Activated naive CD4-positive, alpha-beta T cell treated with anti-CD3 and anti-CD28 coated beads for 36 hours (primary cell): ENCODE measurements at regions of chr4 and their contacts with region 1.

Region 1: GRCh38 chr4:77044461-77045150 is 31.2 kb downstream of the CCNI start:
- DNase-seq: no peak
- H3K4me3 Mint-ChIP-seq: no peak overlapping the region
- H3K27ac Mint-ChIP-seq: no peak overlapping the region
- H3K4me1 Mint-ChIP-seq: peaks cover 6% of the 10 kb centered on the region
- H3K27me3 Mint-ChIP-seq: no peaks in the 10 kb centered on the region

Region 2: DNA sequence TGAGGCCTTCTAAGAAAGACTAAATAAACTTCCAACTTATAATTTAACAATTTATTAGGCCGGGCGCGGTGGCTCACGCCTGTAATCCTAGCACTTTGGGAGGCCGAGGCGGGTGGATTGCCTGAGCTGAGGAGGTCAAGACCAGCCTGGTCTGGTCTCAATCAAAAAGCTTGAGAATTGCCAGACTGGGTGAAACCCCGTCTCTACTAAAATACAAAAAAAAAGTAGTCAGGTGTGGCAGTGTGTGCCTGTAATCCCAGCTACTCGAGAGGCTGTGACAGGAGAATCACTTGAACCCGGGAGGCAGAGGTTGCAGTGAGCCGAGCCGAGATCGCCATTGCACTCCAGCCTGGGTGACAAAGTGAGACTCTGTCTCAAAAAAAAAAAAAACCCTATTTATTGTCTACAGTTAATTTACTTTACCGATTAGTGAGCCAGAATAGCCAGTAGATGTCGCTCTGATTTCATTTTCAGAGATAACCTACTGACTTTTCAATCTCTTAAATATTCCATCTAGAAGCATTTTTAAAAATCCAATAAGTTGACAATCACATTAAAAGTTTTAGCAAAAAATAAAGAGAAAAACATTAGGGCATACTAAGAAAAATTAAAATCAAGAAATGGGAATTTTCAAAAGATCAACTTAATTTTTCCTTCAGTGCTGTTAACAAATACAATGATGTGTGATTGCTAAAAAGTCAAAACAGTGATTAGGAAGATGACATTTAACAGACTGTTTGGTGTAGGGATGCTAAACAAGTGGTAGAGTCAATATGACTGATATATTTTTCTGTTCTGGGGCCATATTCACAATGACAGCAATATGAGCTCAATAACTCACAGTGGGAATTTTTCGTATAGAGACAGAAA is 613.9 kb before region 1 on chr4:
- CTCF ChIA-PET with region 1: interaction called, 5 read pairs
- intact Hi-C with region 1: loop called (anchors 2 kb)
- DNase-seq: no peak
- H3K4me3 Mint-ChIP-seq: no peak overlapping the region
- H3K27ac Mint-ChIP-seq: no peak overlapping the region
- H3K4me1 Mint-ChIP-seq: peaks cover 4% of the 10 kb centered on the region
- H3K27me3 Mint-ChIP-seq: peaks cover 12% of the 10 kb centered on the region

Region 3: GRCh38 chr4:76511947-76512346 is 532.7 kb before region 1 on chr4:
- CTCF ChIA-PET with region 1: interaction called, 3 read pairs
- intact Hi-C with region 1: loop called (anchors 1 kb)
- DNase-seq: no peak
- H3K4me3 Mint-ChIP-seq: no peak overlapping the region
- H3K27ac Mint-ChIP-seq: no peak overlapping the region
- H3K4me1 Mint-ChIP-seq: no peaks in the 10 kb centered on the region
- H3K27me3 Mint-ChIP-seq: peaks cover 2% of the 10 kb centered on the region

Region 4: GRCh38 chr4:76758290-76758882 is 286.2 kb before region 1 on chr4:
- CTCF ChIA-PET with region 1: interaction called, 3 read pairs
- intact Hi-C with region 1: loop called (anchors 5 kb)
- DNase-seq: no peak
- H3K4me3 Mint-ChIP-seq: no peak overlapping the region
- H3K27ac Mint-ChIP-seq: no peak overlapping the region
- H3K4me1 Mint-ChIP-seq: peaks cover 11% of the 10 kb centered on the region
- H3K27me3 Mint-ChIP-seq: peaks cover 6% of the 10 kb centered on the region

Region 5: GRCh38 chr4:76896731-76897535 is 147.7 kb before region 1 on chr4:
- CTCF ChIA-PET with region 1: interaction called, 3 read pairs
- intact Hi-C with region 1: loop called (anchors 5 kb)
- DNase-seq: peak; percentile 16
- H3K4me3 Mint-ChIP-seq: no peak overlapping the region
- H3K27ac Mint-ChIP-seq: no peak overlapping the region
- H3K4me1 Mint-ChIP-seq: peaks cover 9% of the 10 kb centered on the region
- H3K27me3 Mint-ChIP-seq: peaks cover 35% of the 10 kb centered on the region

Region 6: GRCh38 chr4:76949276-76950051 is 95.1 kb before region 1 on chr4 and contains the start of gene SEPTIN11:
- CTCF ChIA-PET with region 1: interaction called, 3 read pairs
- intact Hi-C with region 1: loop called (anchors 1 kb)
- DNase-seq: peak; percentile 81
- H3K4me3 Mint-ChIP-seq: peak within 1 kb of the TSS; percentile 81
- H3K27ac Mint-ChIP-seq: peak within 1 kb of the TSS; percentile 59
- H3K4me1 Mint-ChIP-seq: peaks cover 13% of the 10 kb centered on the region
- H3K27me3 Mint-ChIP-seq: peaks cover 31% of the 10 kb centered on the region
- total RNA-seq, gene SEPTIN11: 24.0 TPM

Region 7: DNA sequence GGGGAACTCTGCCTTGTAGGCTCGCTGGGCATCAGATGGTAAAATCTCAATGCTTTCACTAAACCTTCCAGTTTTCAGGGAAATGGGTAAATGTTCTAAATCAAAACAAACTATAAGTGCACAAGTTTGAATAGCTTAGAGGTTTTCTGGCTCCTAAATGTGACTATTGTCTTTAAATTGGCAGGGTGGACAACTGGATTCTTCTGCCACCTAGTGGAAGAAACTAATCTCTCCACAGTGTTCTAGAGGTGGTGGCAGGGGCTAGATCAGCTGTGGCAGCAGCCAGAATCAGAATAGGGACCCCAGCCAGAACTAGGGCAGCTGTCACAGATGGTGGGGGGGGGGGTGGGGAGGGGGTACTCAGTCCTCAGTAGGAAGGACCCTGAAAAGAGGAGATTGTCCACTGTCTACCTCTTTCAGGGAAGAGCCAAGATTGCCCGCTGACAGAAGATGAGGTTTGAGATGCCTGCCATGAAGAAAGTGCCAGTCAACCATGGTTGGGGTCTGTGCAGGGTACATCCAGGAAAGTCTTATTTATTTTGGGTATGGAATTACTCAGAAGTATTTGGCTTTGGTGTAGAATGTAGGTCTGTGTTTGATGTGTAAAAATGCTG is 313.8 kb after region 1 on chr4:
- CTCF ChIA-PET with region 1: interaction called, 3 read pairs
- intact Hi-C with region 1: loop called (anchors 2 kb)
- DNase-seq: peak; percentile 23
- H3K4me3 Mint-ChIP-seq: no peak overlapping the region
- H3K27ac Mint-ChIP-seq: no peak overlapping the region
- H3K4me1 Mint-ChIP-seq: no peaks in the 10 kb centered on the region
- H3K27me3 Mint-ChIP-seq: no peaks in the 10 kb centered on the region

Region 8: DNA sequence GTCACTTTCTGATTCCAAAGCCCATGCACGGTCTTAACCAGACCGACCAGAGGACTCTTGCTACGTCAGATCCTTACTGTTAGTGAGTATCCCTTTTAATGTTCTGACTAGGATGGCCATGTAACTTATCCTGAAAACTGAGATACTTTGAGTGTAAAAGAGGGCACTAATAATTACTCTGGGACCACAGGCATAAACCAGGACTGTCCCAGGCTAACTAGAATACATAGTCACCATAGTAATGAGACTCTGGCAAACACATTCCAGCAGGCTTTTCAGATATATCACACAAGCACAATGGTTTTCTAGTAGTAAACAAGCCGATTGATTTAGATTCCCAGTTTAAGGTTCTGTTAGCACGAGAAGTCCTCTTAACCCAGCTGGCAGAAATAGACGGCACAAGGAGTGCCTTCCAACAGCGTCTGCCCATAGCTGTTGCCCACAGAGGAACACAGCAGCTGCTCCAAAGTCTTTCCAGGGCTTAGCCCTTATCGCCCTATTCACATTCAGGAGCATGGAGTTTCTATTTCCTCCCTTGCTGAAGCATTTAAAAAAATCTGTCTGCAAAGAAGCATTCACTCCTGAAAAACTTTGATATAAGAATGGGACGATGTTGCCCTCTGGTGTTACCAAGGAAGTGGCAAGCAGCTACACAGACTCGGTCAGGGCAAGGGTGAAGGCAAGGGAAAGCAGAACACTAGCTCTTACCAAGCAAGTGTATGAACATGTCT is 653.4 kb after region 1 on chr4:
- CTCF ChIA-PET with region 1: no interaction called
- intact Hi-C with region 1: no loop called
- DNase-seq: peak; percentile 27
- H3K4me3 Mint-ChIP-seq: no peak overlapping the region
- H3K27ac Mint-ChIP-seq: no peak overlapping the region
- H3K4me1 Mint-ChIP-seq: no peaks in the 10 kb centered on the region
- H3K27me3 Mint-ChIP-seq: peaks cover 2% of the 10 kb centered on the region